CD8-positive, alpha-beta memory T cell (primary cell): ENCODE measurements at regions of chr7 and their contacts with region 1.

Region 1: DNA sequence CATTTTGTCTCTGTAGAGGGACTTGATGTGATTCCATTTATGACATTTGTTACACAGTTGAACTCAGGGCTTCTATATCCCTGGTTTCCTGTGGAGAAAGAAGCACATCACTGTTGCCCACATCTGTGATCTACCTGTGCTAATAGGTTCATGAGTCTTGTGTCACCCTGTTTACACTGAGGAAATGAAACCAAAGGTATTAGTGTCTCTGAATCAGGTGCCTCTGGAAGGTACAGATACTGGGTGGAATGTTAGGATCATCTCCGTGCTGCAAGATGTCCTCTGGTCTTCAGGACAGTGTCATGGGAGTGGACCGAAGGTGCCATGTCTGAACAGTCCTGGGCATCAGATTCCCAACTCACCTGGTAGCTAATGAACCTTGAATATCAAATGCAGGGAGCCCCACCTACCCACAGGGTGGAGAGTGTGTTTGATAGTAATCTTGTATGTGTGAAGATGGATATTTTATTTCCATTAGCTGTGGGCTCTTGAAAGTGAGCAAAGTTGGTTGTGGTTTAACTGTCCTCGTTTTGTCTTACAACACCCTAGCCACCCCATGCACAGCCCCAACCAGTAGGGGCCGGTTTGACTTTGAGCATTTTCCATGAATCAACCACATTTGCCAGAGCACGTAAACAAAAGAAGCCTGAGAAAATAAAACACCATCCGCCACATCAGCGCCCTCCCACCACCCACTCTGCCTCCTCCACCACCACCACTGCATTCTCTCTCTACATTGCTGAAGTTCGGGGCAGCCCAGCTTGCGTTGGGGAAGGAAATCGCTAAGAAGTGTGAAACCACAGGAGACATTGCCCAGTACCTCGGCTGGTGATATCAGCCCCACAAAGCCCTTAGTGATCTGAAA is 40.7 kb downstream of the TARP start:
- DNase-seq: peak; percentile 58 to 95 (median 66)
- H3K4me3 ChIP-seq: peak overlapping the region; percentile 27
- H3K4me3 Mint-ChIP-seq: peak overlapping the region; percentile 40 to 83 (median 77)
- H3K27ac ChIP-seq: peak overlapping the region; percentile 40
- H3K27ac Mint-ChIP-seq: peak overlapping the region; percentile 93 to 98 (median 97)
- H3K4me1 ChIP-seq: peaks cover 72% of the 10 kb centered on the region
- H3K4me1 Mint-ChIP-seq: peaks cover 91 to 100% (median 100%) of the 10 kb centered on the region in 3 donors
- H3K27me3 ChIP-seq: no peaks in the 10 kb centered on the region
- H3K27me3 Mint-ChIP-seq: no peaks in the 10 kb centered on the region

Region 2: DNA sequence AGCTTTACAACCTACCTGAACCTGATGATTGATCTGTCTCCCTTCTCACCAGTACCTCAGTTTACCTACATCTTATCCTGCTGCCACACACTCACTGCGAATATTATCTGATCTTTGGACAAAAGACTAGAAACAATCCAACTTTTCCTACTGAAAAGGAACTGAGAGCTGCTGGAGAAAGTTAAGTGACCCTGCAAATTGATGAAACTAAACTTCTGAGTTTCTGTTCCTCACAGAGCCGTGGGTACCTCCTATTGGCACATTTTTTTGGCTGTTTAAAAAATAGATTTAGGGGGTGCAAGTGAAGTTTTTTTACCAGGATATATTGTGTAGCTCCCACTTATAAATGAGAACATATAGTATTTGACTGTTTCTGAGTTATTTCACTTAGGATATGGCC is 120.7 kb before region 1 on chr7:
- CTCF ChIA-PET with region 1: no interaction called
- POLR2A ChIA-PET with region 1: no interaction called
- DNase-seq: no peak
- H3K4me3 ChIP-seq: no peak overlapping the region
- H3K4me3 Mint-ChIP-seq: no peak overlapping the region
- H3K27ac ChIP-seq: no peak overlapping the region
- H3K27ac Mint-ChIP-seq: no peak overlapping the region
- H3K4me1 ChIP-seq: no peaks in the 10 kb centered on the region
- H3K4me1 Mint-ChIP-seq: no peaks in the 10 kb centered on the region
- H3K27me3 ChIP-seq: peaks cover 9% of the 10 kb centered on the region
- H3K27me3 Mint-ChIP-seq: peaks cover 8 to 42% of the 10 kb centered on the region in 2 donors

Region 3: GRCh38 chr7:38222481-38223096 is 10.1 kb before region 1 on chr7:
- CTCF ChIA-PET with region 1: interaction called, 82 read pairs
- POLR2A ChIA-PET with region 1: interaction called, 13 read pairs
- DNase-seq: peak in 2 of 5 donors; percentile 58 to 60
- H3K4me3 ChIP-seq: no peak overlapping the region
- H3K4me3 Mint-ChIP-seq: peak overlapping the region in 6 of 7 donors; percentile 3 to 73 (median 21)
- H3K27ac ChIP-seq: no peak overlapping the region
- H3K27ac Mint-ChIP-seq: peak overlapping the region; percentile 54 to 98 (median 92)
- H3K4me1 ChIP-seq: peaks cover 60% of the 10 kb centered on the region
- H3K4me1 Mint-ChIP-seq: peaks cover 88 to 100% (median 99%) of the 10 kb centered on the region in 3 donors
- H3K27me3 ChIP-seq: no peaks in the 10 kb centered on the region
- H3K27me3 Mint-ChIP-seq: no peaks in the 10 kb centered on the region

Region 4: DNA sequence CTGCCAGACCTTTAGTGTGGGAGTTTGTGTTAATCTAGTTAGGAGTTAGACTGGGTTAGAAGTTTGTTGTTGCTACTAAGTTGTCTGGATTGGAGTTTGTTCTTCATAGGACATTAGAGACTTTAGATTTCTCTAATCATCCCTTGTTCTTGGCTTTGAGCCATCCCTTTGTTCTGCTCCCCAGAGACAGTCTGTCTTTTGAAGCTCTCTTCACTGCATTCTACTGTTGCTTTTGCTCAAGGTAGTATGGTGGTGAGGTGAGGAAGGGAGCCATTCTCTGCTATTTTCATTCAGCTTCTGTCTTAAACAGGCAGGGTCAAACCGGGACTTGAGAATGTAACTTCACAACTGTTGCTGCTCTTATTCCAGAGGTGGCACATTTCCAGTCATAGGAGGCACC is 51.1 kb after region 1 on chr7:
- CTCF ChIA-PET with region 1: no interaction called
- POLR2A ChIA-PET with region 1: no interaction called
- DNase-seq: no peak
- H3K4me3 ChIP-seq: no peak overlapping the region
- H3K4me3 Mint-ChIP-seq: no peak overlapping the region
- H3K27ac ChIP-seq: no peak overlapping the region
- H3K27ac Mint-ChIP-seq: no peak overlapping the region
- H3K4me1 ChIP-seq: no peaks in the 10 kb centered on the region
- H3K4me1 Mint-ChIP-seq: peaks cover 0 to 2% (median 0%) of the 10 kb centered on the region in 3 donors
- H3K27me3 ChIP-seq: no peaks in the 10 kb centered on the region
- H3K27me3 Mint-ChIP-seq: no peaks in the 10 kb centered on the region

Region 5: DNA sequence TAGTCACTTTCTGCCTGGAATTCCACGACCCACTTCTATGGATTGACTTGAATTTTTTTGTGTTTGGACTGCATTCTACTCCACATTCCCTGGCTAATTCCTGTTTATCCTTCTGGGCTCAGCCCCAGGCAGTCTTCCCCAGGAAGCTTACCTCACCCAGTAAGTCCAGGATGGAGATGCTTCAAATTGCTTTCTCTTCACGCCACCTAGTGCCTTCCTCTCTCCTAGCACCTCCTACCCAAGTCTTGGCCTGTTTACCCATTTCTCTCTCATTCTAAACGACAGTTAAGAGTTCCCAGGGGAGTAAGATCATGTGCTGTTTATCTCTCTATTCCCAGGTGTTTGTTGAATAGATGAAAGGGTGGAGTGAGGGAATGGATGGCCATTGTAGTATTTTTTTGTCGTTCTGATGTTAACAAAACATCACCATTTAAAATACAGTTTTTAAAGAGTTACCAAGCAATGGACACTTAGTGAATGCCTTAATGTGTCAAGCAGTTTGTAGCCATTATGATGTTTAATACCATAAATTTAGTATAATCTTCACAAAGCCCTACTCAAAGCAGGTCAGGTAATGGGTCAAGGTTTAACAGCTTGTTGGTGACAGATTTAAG is 86.2 kb after region 1 on chr7:
- CTCF ChIA-PET with region 1: interaction called, 13 read pairs
- POLR2A ChIA-PET with region 1: no interaction called
- DNase-seq: no peak
- H3K4me3 ChIP-seq: peak overlapping the region; percentile 19
- H3K4me3 Mint-ChIP-seq: peak overlapping the region; percentile 90 to 99 (median 93)
- H3K27ac ChIP-seq: peak overlapping the region; percentile 45
- H3K27ac Mint-ChIP-seq: peak overlapping the region; percentile 91 to 100 (median 97)
- H3K4me1 ChIP-seq: peaks cover 26% of the 10 kb centered on the region
- H3K4me1 Mint-ChIP-seq: peaks cover 38 to 59% (median 54%) of the 10 kb centered on the region in 3 donors
- H3K27me3 ChIP-seq: no peaks in the 10 kb centered on the region
- H3K27me3 Mint-ChIP-seq: no peaks in the 10 kb centered on the region